H1 (cell line): ENCODE measurements at regions of chr9 and their contacts with region 1.

Region 1: DNA sequence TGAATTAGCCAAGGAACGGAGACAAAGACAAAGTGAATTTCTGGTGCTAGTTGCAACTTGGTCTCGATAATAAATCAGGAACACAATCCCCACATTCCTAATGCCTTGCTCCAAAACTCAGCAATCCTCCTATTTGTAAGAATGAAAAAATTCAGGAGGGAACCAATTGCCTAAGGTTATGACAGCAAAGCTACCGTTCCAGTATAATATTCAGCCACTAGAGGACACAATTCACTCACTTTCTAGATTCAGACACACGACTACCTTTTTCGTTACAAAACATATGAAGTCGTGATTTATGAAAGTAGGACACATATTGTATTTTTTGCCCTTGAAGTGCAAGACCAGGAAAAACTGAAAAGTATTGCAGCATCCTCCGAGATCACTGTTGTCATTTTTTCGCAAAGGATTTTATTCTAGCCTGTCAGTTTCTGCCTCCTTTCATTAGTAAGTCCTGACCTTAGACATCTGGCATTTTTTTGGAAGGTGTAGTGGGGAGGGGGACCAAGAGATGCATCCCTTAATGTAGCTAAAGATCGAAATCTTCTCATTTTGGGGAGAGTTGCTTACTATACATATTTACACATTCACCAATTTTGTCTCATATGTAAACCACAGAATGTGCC is 133.1 kb downstream of the DOCK8 start:
- DNase-seq: no peak
- H3K4me3 ChIP-seq: no peak overlapping the region
- H3K27ac ChIP-seq: no peak overlapping the region
- H3K4me1 ChIP-seq: no peaks in the 10 kb centered on the region
- H3K27me3 ChIP-seq: no peaks in the 10 kb centered on the region
- CTCF ChIP-seq: peak in 2 of 3 experiments; percentile 48 to 76; a peak in 3 of 4 replicates
- EP300 ChIP-seq: no peak
- POLR2A ChIP-seq: no peak
- RAD21 ChIP-seq: peak; percentile 85

Region 2: DNA sequence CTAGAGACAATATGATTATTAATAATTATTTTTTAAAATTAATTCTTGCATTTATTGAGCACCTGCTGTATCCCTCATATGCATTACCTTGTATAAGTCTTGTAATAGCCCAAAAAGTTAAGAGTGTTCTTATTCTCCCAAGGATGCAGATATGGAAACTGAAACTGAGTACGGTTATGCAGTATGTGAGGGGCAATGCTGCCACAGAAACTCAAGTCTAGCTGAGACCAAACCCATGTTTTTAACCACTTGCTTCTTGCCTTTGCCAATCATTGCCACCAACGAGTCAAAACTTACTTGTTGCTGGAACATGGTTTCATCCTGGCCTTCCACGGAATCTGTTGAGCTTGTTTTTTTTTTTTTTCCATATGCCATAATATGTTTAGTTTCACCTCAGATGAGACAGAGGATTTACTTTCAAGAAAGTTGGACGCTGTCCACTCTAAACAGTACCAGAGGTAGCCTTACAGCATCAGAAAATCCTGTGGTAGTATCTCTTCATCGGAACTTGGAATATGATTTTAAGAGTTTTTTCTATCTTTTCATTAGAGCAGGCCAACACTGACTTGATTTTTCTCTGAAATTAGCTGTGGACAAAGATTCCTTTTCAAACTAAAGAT is 105.2 kb before region 1 on chr9:
- CTCF ChIA-PET with region 1: no interaction called
- POLR2A ChIA-PET with region 1: no interaction called
- DNase-seq: no peak
- H3K4me3 ChIP-seq: no peak overlapping the region
- H3K27ac ChIP-seq: no peak overlapping the region
- H3K4me1 ChIP-seq: no peaks in the 10 kb centered on the region
- H3K27me3 ChIP-seq: no peaks in the 10 kb centered on the region
- CTCF ChIP-seq: no peak
- EP300 ChIP-seq: no peak
- POLR2A ChIP-seq: no peak
- RAD21 ChIP-seq: no peak

Region 3: DNA sequence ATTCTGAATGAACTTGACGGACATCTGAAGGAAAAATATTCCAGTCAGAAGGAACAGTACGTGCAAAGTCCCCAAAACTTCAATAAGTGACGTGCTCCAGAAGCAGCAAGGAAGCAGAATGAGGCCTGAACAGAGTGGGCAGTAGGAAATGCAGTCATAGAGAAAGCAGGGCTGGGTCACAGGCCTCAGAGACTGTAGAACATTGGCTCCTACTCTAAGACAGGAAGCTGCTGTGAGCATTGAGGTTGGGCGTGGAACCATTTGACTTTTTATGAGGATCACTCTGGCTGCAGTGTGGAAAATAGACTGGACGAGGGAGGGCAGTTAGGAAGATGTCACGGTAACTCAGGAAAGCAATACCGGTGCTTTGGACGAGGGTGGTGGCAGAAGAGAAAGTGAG is 69.1 kb before region 1 on chr9:
- CTCF ChIA-PET with region 1: no interaction called
- POLR2A ChIA-PET with region 1: no interaction called
- DNase-seq: no peak
- H3K4me3 ChIP-seq: no peak overlapping the region
- H3K27ac ChIP-seq: no peak overlapping the region
- H3K4me1 ChIP-seq: no peaks in the 10 kb centered on the region
- H3K27me3 ChIP-seq: no peaks in the 10 kb centered on the region
- CTCF ChIP-seq: no peak
- EP300 ChIP-seq: no peak
- POLR2A ChIP-seq: no peak
- RAD21 ChIP-seq: no peak

Region 4: GRCh38 chr9:385818-386398 is 38.1 kb after region 1 on chr9:
- CTCF ChIA-PET with region 1: interaction called, 20 read pairs
- POLR2A ChIA-PET with region 1: no interaction called
- DNase-seq: peak in 1 of 2 experiments; percentile 65
- H3K4me3 ChIP-seq: no peak overlapping the region
- H3K27ac ChIP-seq: no peak overlapping the region
- H3K4me1 ChIP-seq: peaks cover 2 to 7% (median 5%) of the 10 kb centered on the region in 4 experiments; a peak in 6 of 7 replicates
- H3K27me3 ChIP-seq: no peaks in the 10 kb centered on the region
- CTCF ChIP-seq: peak; percentile 54 to 95 (median 88)
- EP300 ChIP-seq: no peak
- POLR2A ChIP-seq: no peak
- RAD21 ChIP-seq: peak; percentile 98 to 99